AG04450 (cell line): ENCODE measurements at regions of chr22 and their contacts with region 1.

Region 1: GRCh38 chr22:32622004-32622743 is 147.6 kb downstream of the FBXO7 start:
- DNase-seq: peak; percentile 94
- H3K4me3 ChIP-seq: peak overlapping the region; percentile 25
- H3K27ac ChIP-seq: peak overlapping the region; percentile 98
- H3K27me3 ChIP-seq: no peaks in the 10 kb centered on the region
- CTCF ChIP-seq: no peak

Region 2: GRCh38 chr22:32579509-32580234 is 42.5 kb before region 1 on chr22:
- CTCF ChIA-PET with region 1: no interaction called
- POLR2A ChIA-PET with region 1: interaction called, 12 read pairs
- DNase-seq: no peak
- H3K4me3 ChIP-seq: no peak overlapping the region
- H3K27ac ChIP-seq: no peak overlapping the region
- H3K27me3 ChIP-seq: peaks cover 4% of the 10 kb centered on the region
- CTCF ChIP-seq: no peak

Region 3: DNA sequence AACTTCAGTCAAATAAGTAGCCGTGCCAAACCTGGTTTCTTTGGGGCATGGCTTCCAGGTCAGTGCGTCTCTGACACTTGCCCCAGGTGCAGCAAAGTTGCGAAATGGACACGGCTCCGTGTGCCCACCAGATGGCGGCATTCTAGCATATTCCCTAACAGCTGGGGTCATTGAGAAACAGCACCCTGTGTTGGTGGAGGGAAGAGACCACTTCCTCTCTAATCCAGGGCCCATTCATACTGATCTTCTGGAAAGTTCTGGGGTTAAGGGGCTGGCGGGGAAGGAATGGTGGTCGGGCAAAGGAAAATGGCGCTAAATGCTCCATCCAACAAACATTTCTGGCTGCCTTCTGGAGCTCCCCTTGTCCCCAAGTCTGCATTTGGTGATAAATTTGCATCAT is 38.1 kb after region 1 on chr22:
- CTCF ChIA-PET with region 1: interaction called, 5 read pairs
- POLR2A ChIA-PET with region 1: interaction called, 10 read pairs
- DNase-seq: no peak
- H3K4me3 ChIP-seq: no peak overlapping the region
- H3K27ac ChIP-seq: peak overlapping the region; percentile 96
- H3K27me3 ChIP-seq: no peaks in the 10 kb centered on the region
- CTCF ChIP-seq: peak; percentile 68

Region 4: DNA sequence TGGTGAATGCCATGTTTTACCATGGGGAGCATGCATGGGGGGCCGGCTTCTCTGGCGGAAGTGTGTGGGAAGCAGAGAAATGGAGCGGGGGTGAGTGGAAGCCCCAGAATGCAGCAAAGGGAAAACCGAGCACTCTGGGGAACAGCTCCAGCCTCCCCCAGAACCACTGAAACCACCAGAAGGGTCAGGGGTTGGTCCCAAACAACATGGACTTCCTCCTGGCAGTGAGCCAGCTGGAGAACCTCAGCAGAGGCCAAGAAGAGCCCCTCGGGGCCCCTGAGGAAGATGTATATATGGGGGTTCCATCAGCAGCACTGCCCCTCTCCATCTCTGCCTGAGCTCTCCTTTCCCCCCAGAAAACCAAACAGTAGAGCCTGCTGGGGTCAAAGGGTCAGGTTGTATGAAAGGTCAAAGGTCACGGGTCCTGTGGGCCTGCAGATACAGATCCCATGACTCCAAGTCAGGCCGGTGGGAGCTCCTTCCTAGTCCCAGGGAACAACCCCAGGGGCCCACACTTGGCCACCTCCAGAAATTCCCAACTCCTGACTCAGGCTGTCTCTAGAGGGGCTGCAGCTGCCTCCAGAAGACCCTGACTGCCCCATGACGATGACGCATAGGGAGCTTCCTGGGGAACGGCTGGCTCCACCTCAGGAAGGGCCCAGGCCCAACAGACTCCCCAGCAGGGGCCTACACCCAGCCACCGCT is 130.8 kb after region 1 on chr22:
- CTCF ChIA-PET with region 1: no interaction called
- POLR2A ChIA-PET with region 1: interaction called, 12 read pairs
- DNase-seq: peak; percentile 52
- H3K4me3 ChIP-seq: no peak overlapping the region
- H3K27ac ChIP-seq: peak overlapping the region; percentile 61
- H3K27me3 ChIP-seq: no peaks in the 10 kb centered on the region
- CTCF ChIP-seq: no peak